ENCODE measurements at regions of chr21 and their contacts with region 1.

Region 1: DNA sequence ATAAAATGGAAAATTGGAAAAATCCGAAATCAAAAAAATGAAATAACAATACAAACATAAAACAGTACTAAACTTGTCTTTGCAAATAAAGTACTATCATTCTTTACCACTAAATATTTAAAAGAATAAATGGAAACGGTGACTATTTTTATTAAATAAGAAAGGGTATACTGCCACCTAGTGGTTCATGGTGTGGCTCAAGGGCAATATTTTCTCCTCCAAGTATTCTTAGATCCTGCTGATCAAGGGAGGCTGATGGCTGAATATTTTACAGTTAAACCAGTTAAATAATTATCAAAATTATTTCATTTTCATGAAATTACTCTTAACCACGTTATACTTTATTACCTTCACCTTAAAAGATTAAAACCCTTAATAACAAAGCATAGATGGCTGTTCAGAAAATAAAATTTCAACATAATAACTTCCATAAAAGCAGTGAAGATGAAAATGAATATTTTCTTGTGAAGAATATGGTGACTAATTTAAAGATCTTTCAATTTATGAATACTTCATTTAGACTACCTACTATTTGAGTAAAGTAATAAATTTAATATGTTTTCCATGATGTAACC is 1793.9 kb downstream of the NCAM2 start:
- DNase-seq: peak; percentile 77
- H3K4me3 ChIP-seq: no peak overlapping the region
- H3K27ac ChIP-seq: no peak overlapping the region
- H3K4me1 ChIP-seq: no peaks in the 10 kb centered on the region
- H3K27me3 ChIP-seq: no peaks in the 10 kb centered on the region
- CTCF ChIP-seq: peak; percentile 45 to 46
- POLR2A ChIP-seq: no peak

Region 2: DNA sequence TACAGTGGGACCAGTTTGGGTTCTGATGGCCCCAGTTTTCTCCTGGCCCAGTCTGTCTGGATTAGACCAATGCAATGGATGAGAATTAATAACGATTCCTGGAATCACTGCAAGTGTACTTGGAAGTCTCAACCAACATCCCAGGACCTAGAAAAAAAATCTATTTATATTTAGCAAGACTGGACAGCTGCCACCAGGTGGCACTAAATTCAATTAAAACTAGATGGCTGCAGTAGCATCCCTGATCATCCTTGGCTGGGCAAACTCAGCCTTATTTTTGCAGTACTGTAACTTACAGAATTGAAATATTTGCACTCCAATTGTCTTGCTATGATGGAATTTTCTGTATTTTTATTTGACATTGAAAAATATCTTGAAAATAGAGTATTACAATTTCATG is 1628.2 kb before region 1 on chr21:
- CTCF ChIA-PET with region 1: interaction called, 8 read pairs
- POLR2A ChIA-PET with region 1: no interaction called
- dilution Hi-C with region 1: no loop called
- intact Hi-C with region 1: loop called (anchors 1 kb)
- DNase-seq: peak; percentile 52
- H3K4me3 ChIP-seq: no peak overlapping the region
- H3K27ac ChIP-seq: no peak overlapping the region
- H3K4me1 ChIP-seq: no peaks in the 10 kb centered on the region
- H3K27me3 ChIP-seq: no peaks in the 10 kb centered on the region
- CTCF ChIP-seq: peak; percentile 44
- POLR2A ChIP-seq: no peak

Region 3: GRCh38 chr21:22575165-22575584 is 216.9 kb before region 1 on chr21:
- CTCF ChIA-PET with region 1: interaction called, 25 read pairs
- POLR2A ChIA-PET with region 1: no interaction called
- dilution Hi-C with region 1: no loop called
- intact Hi-C with region 1: loop called (anchors 1 kb)
- DNase-seq: peak; percentile 93
- H3K4me3 ChIP-seq: no peak overlapping the region
- H3K27ac ChIP-seq: no peak overlapping the region
- H3K4me1 ChIP-seq: peaks cover 3% of the 10 kb centered on the region
- H3K27me3 ChIP-seq: no peaks in the 10 kb centered on the region
- CTCF ChIP-seq: peak; percentile 49 to 51
- POLR2A ChIP-seq: no peak

Region 4: GRCh38 chr21:22900511-22900910 is 108.4 kb after region 1 on chr21:
- CTCF ChIA-PET with region 1: interaction called, 4 read pairs
- POLR2A ChIA-PET with region 1: no interaction called
- dilution Hi-C with region 1: no loop called
- intact Hi-C with region 1: loop called (anchors 2 kb)
- DNase-seq: peak; percentile 98
- H3K4me3 ChIP-seq: no peak overlapping the region
- H3K27ac ChIP-seq: peak overlapping the region; percentile 99
- H3K4me1 ChIP-seq: peaks cover 37% of the 10 kb centered on the region
- H3K27me3 ChIP-seq: no peaks in the 10 kb centered on the region
- CTCF ChIP-seq: no peak
- POLR2A ChIP-seq: no peak

Region 5: DNA sequence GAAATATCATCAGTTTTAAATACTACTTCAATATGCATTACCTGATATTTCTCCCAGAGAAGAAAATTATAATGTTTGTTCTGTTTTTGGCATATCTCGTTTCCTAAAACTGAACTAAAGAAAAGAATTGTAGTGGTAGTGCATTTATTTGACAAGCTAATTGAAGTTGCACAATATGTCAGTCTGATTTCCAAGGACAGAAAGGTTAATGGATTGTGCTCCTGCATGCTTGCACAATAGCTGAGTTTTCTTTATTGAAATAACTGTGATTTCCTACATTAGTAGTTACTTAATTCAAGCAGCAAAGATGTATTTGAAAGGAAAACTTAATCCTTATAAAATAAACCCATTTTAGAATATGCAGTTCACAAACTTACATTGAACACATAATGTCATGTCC is 253.9 kb after region 1 on chr21:
- CTCF ChIA-PET with region 1: no interaction called
- POLR2A ChIA-PET with region 1: no interaction called
- dilution Hi-C with region 1: no loop called
- intact Hi-C with region 1: no loop called
- DNase-seq: no peak
- H3K4me3 ChIP-seq: no peak overlapping the region
- H3K27ac ChIP-seq: no peak overlapping the region
- H3K4me1 ChIP-seq: no peaks in the 10 kb centered on the region
- H3K27me3 ChIP-seq: no peaks in the 10 kb centered on the region
- CTCF ChIP-seq: no peak
- POLR2A ChIP-seq: no peak

Region 6: DNA sequence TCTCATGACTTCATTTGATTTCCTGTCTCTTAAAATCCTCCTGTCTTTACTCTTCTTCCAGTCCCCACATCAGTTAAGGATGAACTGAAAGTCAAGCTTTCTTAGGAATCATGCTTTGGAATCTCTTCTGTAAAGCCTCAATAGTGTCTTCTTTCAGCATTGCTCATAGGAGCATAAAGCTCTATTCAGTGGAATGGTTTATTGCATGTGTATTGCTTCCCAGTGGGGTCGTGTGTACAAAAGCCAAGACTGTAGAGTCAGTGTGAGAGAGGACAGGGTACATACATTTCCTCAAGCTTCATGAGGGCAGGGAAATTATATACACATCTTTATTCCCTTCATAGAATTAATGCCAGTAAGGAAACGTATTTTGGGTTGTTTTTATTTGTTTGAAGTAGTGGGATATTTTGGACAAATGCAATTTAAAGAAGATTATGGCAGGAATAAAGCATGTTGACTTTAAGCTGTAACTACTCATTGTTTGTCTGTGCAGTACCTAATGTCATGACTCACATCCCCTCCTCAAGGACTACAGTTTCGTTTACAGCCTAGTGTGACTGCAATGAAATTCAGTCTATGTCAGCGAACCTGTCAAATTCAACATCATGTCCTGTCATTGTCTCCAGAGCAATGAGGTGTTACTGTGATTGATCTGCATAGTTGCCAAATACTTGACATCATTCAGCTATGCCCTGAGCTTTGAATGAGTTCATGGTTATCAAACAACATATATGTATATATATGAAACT is 370.3 kb after region 1 on chr21:
- CTCF ChIA-PET with region 1: interaction called, 4 read pairs
- POLR2A ChIA-PET with region 1: no interaction called
- dilution Hi-C with region 1: no loop called
- intact Hi-C with region 1: loop called (anchors 5 kb)
- DNase-seq: peak; percentile 94
- H3K4me3 ChIP-seq: no peak overlapping the region
- H3K27ac ChIP-seq: peak overlapping the region; percentile 89
- H3K4me1 ChIP-seq: peaks cover 18% of the 10 kb centered on the region
- H3K27me3 ChIP-seq: no peaks in the 10 kb centered on the region
- CTCF ChIP-seq: no peak
- POLR2A ChIP-seq: no peak

Measured in endothelial cell of umbilical vein (primary cell).